Caco-2 (cell line): ENCODE measurements at regions of chr1 and their contacts with region 1.

Region 1: DNA sequence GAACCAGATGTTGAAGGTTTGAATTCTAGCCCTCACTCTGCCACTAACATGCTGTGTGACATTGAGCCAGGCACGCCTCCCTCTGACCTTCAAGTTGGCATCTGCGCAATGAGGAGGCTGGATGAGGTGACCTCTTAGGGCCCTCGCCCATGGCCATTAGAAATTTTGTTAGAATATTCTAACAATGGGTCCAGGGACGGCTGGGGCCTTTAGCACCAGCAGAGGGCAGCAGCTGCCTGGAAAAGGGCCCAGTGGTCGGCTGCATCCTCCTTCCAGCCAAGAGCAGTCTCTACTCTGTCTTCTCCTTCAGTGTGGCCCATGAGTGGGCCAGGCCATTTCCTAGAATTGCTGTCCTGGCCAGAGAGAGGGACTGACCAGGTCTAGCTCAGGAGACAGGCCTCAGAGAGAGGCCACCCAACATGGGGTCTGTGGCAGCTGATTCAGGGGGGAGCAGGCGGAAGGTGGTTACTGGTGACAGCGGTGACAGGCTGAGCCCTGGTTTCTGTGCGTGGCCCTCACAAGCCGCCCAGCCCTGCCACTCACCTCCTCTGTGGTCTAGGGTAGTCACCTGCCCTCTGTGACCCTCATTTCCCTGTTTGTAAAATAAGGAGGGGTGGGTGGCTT is 101.3 kb upstream of the ACTL8 start:
- DNase-seq: peak in 1 of 2 experiments; percentile 56
- H3K4me3 ChIP-seq: no peak overlapping the region
- H3K4me3 Mint-ChIP-seq: no peak overlapping the region
- H3K27ac Mint-ChIP-seq: no peak overlapping the region
- H3K4me1 ChIP-seq: no peaks in the 10 kb centered on the region
- H3K4me1 Mint-ChIP-seq: no peaks in the 10 kb centered on the region
- H3K27me3 ChIP-seq: no peaks in the 10 kb centered on the region
- H3K27me3 Mint-ChIP-seq: no peaks in the 10 kb centered on the region
- CTCF ChIP-seq: peak; percentile 62 to 63

Region 2: DNA sequence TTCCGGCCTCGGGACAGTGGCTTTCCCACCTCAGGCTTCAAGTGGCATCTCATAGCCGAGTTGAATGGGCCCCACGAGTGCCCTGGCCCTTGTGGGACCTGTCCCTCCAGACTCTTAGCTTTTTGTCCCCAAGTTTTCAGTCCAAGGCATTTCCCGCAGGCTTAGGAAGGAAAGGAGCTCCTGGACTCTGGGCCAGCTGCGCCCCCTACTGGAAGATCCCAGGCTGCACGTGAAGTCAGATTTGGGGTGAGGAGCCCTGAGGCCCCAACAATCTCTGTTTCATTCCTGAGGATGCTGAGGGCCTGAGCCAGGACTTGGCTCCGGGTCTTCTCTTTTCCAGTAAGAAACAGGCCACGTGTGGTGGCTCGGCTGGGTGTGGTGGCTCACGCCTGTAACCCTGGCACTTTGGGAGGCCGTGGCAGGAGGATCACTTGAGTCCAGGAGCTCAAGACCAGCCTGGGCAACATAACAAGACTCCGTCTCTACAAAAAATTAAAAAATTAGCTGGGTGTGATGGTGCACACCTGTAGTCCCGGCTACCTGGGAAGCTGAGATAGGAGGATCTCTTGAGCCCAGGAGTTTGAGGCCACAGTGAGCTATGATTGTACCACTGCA is 46.9 kb before region 1 on chr1:
- CTCF ChIA-PET with region 1: no interaction called
- POLR2A ChIA-PET with region 1: no interaction called
- intact Hi-C with region 1: no loop called
- DNase-seq: peak; percentile 66 to 76
- H3K4me3 ChIP-seq: no peak overlapping the region
- H3K4me3 Mint-ChIP-seq: no peak overlapping the region
- H3K27ac Mint-ChIP-seq: no peak overlapping the region
- H3K4me1 ChIP-seq: no peaks in the 10 kb centered on the region
- H3K4me1 Mint-ChIP-seq: no peaks in the 10 kb centered on the region
- H3K27me3 ChIP-seq: no peaks in the 10 kb centered on the region
- H3K27me3 Mint-ChIP-seq: no peaks in the 10 kb centered on the region
- CTCF ChIP-seq: peak; percentile 83 to 86

Region 3: GRCh38 chr1:17624611-17625233 is 29.1 kb before region 1 on chr1:
- CTCF ChIA-PET with region 1: no interaction called
- POLR2A ChIA-PET with region 1: no interaction called
- intact Hi-C with region 1: no loop called
- DNase-seq: no peak
- H3K4me3 ChIP-seq: no peak overlapping the region
- H3K4me3 Mint-ChIP-seq: no peak overlapping the region
- H3K27ac Mint-ChIP-seq: no peak overlapping the region
- H3K4me1 ChIP-seq: no peaks in the 10 kb centered on the region
- H3K4me1 Mint-ChIP-seq: no peaks in the 10 kb centered on the region
- H3K27me3 ChIP-seq: no peaks in the 10 kb centered on the region
- H3K27me3 Mint-ChIP-seq: no peaks in the 10 kb centered on the region
- CTCF ChIP-seq: no peak

Region 4: DNA sequence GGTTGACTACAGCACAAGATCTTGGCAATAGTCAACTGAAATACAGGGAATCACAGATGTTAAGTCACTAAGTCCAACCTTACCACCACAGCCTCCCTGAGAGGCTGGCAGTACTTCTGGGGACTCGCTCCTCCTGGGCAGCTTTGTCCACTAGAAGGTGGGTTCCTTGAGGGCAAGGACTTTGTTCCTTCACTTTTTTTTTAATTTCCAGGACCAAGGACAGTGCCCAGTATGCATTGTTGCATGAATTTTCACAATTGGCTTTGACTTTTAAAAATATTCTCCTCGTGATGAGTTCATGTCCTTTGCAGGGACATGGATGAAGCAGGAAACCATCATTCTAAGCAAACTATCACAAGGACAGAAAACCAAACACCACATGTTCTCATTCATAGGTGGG is 357.1 kb after region 1 on chr1:
- CTCF ChIA-PET with region 1: no interaction called
- POLR2A ChIA-PET with region 1: no interaction called
- intact Hi-C with region 1: no loop called
- DNase-seq: peak in 1 of 2 experiments; percentile 2
- H3K4me3 ChIP-seq: no peak overlapping the region
- H3K4me3 Mint-ChIP-seq: no peak overlapping the region
- H3K27ac Mint-ChIP-seq: no peak overlapping the region
- H3K4me1 ChIP-seq: no peaks in the 10 kb centered on the region
- H3K4me1 Mint-ChIP-seq: no peaks in the 10 kb centered on the region
- H3K27me3 ChIP-seq: peaks cover 1% of the 10 kb centered on the region; the same call in 1 of the 2 replicates
- H3K27me3 Mint-ChIP-seq: peaks cover 4% of the 10 kb centered on the region
- CTCF ChIP-seq: no peak

Region 5: DNA sequence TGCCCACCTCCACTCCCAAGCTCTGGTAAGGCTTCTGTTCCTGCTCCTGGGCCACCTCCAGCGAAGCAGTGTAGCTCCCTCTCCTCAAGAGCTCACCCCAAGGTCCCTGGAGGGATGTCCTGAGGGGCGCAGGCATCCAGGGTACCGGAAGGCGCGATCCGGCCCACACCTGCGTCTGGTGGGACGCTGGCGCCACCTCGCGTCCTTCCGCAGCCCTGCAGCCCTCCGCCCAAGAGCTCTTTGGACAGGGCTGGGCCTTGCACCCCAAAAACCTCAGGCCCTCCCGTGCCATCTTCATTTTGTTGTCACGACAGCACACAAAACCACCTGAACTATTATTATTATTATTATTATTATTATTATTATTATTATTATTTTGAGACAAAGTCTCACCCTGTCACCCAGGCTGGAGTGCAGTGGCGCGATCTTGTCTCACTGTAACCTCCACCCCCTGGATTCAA is 927.6 kb after region 1 on chr1:
- CTCF ChIA-PET with region 1: no interaction called
- POLR2A ChIA-PET with region 1: no interaction called
- intact Hi-C with region 1: loop called (anchors 10 kb)
- DNase-seq: peak in 1 of 2 experiments; percentile 48
- H3K4me3 ChIP-seq: no peak overlapping the region
- H3K4me3 Mint-ChIP-seq: no peak overlapping the region
- H3K27ac Mint-ChIP-seq: no peak overlapping the region
- H3K4me1 ChIP-seq: no peaks in the 10 kb centered on the region
- H3K4me1 Mint-ChIP-seq: no peaks in the 10 kb centered on the region
- H3K27me3 ChIP-seq: no peaks in the 10 kb centered on the region
- H3K27me3 Mint-ChIP-seq: peaks cover 4% of the 10 kb centered on the region
- CTCF ChIP-seq: peak; percentile 77 to 87